Adrenal gland (tissue), 19 donors: ENCODE measurements at regions of chr14 and their contacts with region 1.

Region 1: GRCh38 chr14:105374383-105374782 is 24.0 kb upstream of the TEX22 start:
- DNase-seq: no peak
- H3K4me3 ChIP-seq: no peak overlapping the region
- H3K27ac ChIP-seq: no peak overlapping the region
- H3K4me1 ChIP-seq: no peaks in the 10 kb centered on the region
- H3K27me3 ChIP-seq: no peaks in the 10 kb centered on the region
- CTCF ChIP-seq: no peak
- POLR2A ChIP-seq: no peak

Region 2: GRCh38 chr14:105248368-105248756 is 126.0 kb before region 1 on chr14 and contains the start of gene BTBD6:
- intact Hi-C with region 1: no loop called
- DNase-seq: peak; percentile 82 to 94 (median 88)
- H3K4me3 ChIP-seq: peak within 1 kb of the TSS in 2 of 4 donors; percentile 26 to 91
- H3K27ac ChIP-seq: peak within 1 kb of the TSS in 4 of 5 donors; percentile 65 to 100 (median 86)
- H3K4me1 ChIP-seq: peaks cover 6 to 24% of the 10 kb centered on the region in 2 donors
- H3K27me3 ChIP-seq: no peaks in the 10 kb centered on the region
- CTCF ChIP-seq: peak in 2 of 6 experiments; percentile 10 to 23
- POLR2A ChIP-seq: peak in 1 of 2 donors; percentile 40
- total RNA-seq, gene BTBD6: 23.3 to 43.3 (median 31.3) TPM

Region 3: DNA sequence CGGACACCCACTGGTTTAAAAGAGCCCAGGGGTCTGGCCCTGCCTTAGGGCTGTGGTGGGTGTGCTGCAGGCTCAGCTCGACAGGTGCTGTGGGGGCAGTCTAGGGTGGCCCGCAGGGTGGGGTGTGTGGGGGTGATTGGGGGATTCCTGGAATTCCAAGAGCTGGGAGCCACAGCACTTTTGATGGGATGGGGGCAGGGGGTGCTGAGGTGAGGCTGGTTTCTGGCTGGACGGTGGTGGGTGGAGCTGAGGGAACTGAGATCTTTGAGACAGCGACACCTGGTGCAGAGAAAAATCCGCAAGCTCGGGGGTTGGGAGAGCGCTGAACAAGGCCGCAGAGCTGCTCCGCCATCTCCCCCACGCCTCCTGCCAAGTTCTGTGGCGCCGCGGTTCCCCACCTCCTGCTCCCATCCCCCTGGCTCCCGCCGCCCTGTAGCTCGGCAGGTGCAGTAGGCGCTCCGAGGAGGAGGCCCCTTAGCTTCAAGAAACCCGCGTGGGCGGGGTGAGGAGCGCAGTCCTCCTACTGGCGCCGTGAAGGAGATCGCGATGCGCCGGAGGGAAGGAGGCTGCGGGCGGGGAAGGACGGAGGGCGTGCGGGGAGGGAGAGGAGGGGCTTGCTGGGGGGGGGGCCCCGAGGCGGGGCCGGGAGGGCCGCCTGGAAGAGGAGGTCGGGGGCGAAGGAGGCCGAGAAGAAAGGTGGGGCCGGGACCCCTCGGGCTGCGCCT is 115.3 kb after region 1 on chr14:
- intact Hi-C with region 1: loop called (anchors 5 kb)
- DNase-seq: peak; percentile 83 to 95 (median 86)
- H3K4me3 ChIP-seq: peak overlapping the region in 2 of 4 donors; percentile 17 to 77
- H3K27ac ChIP-seq: peak overlapping the region in 4 of 5 donors; percentile 82 to 91 (median 86)
- H3K4me1 ChIP-seq: peaks cover 7 to 35% of the 10 kb centered on the region in 2 donors
- H3K27me3 ChIP-seq: peaks cover 11% of the 10 kb centered on the region
- CTCF ChIP-seq: peak; percentile 38 to 66 (median 63)
- POLR2A ChIP-seq: peak in 1 of 2 donors; percentile 31

Region 4: GRCh38 chr14:105527661-105528581 is 153.5 kb after region 1 on chr14:
- intact Hi-C with region 1: loop called in 1 of 2 experiments (anchors 5 kb)
- DNase-seq: peak; percentile 60 to 86 (median 77)
- H3K4me3 ChIP-seq: peak overlapping the region in 2 of 4 donors; percentile 43 to 66
- H3K27ac ChIP-seq: peak overlapping the region in 2 of 5 donors; percentile 29 to 30
- H3K4me1 ChIP-seq: peaks cover 15 to 32% of the 10 kb centered on the region in 2 donors
- H3K27me3 ChIP-seq: peaks cover 18% of the 10 kb centered on the region
- CTCF ChIP-seq: peak; percentile 51 to 92 (median 78)
- POLR2A ChIP-seq: peak in 1 of 2 donors; percentile 13

Region 5: GRCh38 chr14:105602799-105603793 is 228.7 kb after region 1 on chr14:
- intact Hi-C with region 1: no loop called
- DNase-seq: no peak
- H3K4me3 ChIP-seq: no peak overlapping the region
- H3K27ac ChIP-seq: no peak overlapping the region
- H3K4me1 ChIP-seq: no peaks in the 10 kb centered on the region
- H3K27me3 ChIP-seq: no peaks in the 10 kb centered on the region
- CTCF ChIP-seq: no peak
- POLR2A ChIP-seq: no peak